Activated naive CD4-positive, alpha-beta T cell treated with anti-CD3 and anti-CD28 coated beads, Interleukin-2, amount 10 ng/mL, durations not matched to agents 7 days and 5 days (primary cell): ENCODE measurements at regions of chr7 and their contacts with region 1.

Region 1: DNA sequence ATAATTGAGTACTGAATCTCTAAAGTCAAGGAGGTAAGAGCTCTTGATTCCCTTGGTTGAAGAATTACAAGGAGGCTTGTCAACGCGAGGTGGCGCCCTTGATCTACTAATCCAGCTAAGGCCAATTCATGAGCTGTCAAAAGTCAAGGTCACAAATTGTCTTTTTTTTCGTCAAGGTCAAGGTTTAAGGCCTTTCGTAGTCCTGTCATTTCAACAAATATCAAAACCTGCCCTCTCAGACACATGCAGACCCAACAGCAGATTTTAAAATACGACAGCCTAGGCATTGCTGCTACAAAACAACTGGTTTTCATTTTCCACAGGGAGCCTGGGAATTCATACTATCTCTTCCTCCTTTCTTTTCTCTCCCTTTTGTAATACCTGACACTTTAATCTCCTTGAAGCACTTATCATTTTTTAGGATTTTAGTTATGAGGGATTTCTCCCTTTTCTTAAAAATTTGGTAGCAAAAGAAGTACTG is 3.6 kb downstream of the HOXA13 start:
- DNase-seq: peak; percentile 88
- H3K4me3 Mint-ChIP-seq: no peak overlapping the region
- H3K27ac Mint-ChIP-seq: no peak overlapping the region
- H3K4me1 Mint-ChIP-seq: peaks cover 20% of the 10 kb centered on the region
- H3K27me3 Mint-ChIP-seq: peaks cover 88% of the 10 kb centered on the region

Region 2: GRCh38 chr7:27080844-27081436 is 115.4 kb before region 1 on chr7:
- CTCF ChIA-PET with region 1: no interaction called
- DNase-seq: no peak
- H3K4me3 Mint-ChIP-seq: no peak overlapping the region
- H3K27ac Mint-ChIP-seq: no peak overlapping the region
- H3K4me1 Mint-ChIP-seq: peaks cover 7% of the 10 kb centered on the region
- H3K27me3 Mint-ChIP-seq: peaks cover 10% of the 10 kb centered on the region

Region 3: GRCh38 chr7:27179503-27180430 is 16.6 kb before region 1 on chr7:
- CTCF ChIA-PET with region 1: interaction called, 11 read pairs
- DNase-seq: peak; percentile 62
- H3K4me3 Mint-ChIP-seq: no peak overlapping the region
- H3K27ac Mint-ChIP-seq: peak overlapping the region; percentile 65
- H3K4me1 Mint-ChIP-seq: peaks cover 8% of the 10 kb centered on the region
- H3K27me3 Mint-ChIP-seq: peaks cover 99% of the 10 kb centered on the region

Region 4: GRCh38 chr7:27185013-27185855 is 11.1 kb before region 1 on chr7 and contains the start of gene HOXA11:
- CTCF ChIA-PET with region 1: interaction called, 11 read pairs
- DNase-seq: peak; percentile 18
- H3K4me3 Mint-ChIP-seq: peak within 1 kb of the TSS; percentile 51
- H3K27ac Mint-ChIP-seq: peak within 1 kb of the TSS; percentile 86
- H3K4me1 Mint-ChIP-seq: peaks cover 43% of the 10 kb centered on the region
- H3K27me3 Mint-ChIP-seq: peaks cover 100% of the 10 kb centered on the region

Region 5: GRCh38 chr7:27210441-27211083 is 14.2 kb after region 1 on chr7:
- CTCF ChIA-PET with region 1: interaction called, 16 read pairs
- DNase-seq: peak; percentile 57
- H3K4me3 Mint-ChIP-seq: peak overlapping the region; percentile 2
- H3K27ac Mint-ChIP-seq: peak overlapping the region; percentile 40
- H3K4me1 Mint-ChIP-seq: peaks cover 8% of the 10 kb centered on the region
- H3K27me3 Mint-ChIP-seq: peaks cover 99% of the 10 kb centered on the region

Region 6: GRCh38 chr7:27921081-27921836 is 724.9 kb after region 1 on chr7:
- CTCF ChIA-PET with region 1: interaction called, 24 read pairs
- DNase-seq: peak; percentile 30
- H3K4me3 Mint-ChIP-seq: no peak overlapping the region
- H3K27ac Mint-ChIP-seq: no peak overlapping the region
- H3K4me1 Mint-ChIP-seq: no peaks in the 10 kb centered on the region
- H3K27me3 Mint-ChIP-seq: no peaks in the 10 kb centered on the region